ENCODE measurements at regions of chr7 and their contacts with region 1.

Region 1: DNA sequence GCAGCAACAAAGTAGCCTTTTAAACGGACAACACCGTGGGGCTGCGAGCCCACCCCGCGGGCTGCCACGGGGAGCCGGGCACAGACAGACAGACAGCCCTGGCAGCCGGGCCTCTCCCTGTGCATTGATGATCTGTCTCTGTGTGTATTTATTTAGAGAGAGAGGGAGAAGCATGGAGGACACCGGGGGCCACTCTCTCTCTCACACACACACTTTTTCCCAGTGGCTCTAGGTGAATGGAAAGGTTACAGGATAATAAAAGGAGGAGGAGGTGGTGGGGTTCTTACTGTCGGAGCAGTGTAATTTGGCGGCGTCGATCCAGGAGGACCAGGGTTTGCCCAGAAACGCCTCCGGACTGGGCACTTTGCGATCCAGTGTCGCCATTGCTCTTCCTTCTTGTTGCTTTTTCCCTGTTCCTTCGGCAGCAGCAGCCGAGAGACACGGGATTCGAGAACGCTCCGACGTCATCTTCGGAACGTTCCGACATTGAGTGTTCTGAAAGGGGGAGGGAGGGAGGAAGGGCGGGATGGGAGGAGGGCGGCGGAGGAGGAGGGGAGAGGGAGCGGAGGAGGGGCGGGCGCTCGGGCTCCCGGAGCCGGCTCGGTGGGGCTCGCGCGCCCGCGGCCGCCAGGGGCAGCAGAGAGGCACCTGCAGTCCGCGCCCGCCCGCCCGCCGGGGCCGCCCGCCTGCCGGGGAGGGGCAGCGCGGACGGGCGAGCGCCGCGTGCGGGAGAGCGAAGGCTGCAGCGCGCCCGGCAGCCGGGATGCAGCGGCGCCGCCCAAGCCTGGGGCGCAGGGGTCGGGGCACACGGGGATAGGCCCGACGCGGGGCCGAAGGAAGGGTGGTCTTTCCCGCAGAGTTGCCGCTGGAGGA is at the start of gene ATXN7L1:
- DNase-seq: peak; percentile 94 to 95
- ATAC-seq: peak; percentile 95 to 98 (median 96)
- H3K4me3 ChIP-seq: peak within 1 kb of the TSS; percentile 67 to 98 (median 80)
- H3K27ac ChIP-seq: peak within 1 kb of the TSS; percentile 34 to 92 (median 78)
- H3K4me1 ChIP-seq: peaks cover 0 to 34% (median 11%) of the 10 kb centered on the region in 9 donors
- H3K27me3 ChIP-seq: peaks cover 0 to 18% (median 0%) of the 10 kb centered on the region in 7 donors
- CTCF ChIP-seq: peak; percentile 29 to 89 (median 58)
- total RNA-seq, gene ATXN7L1: 3.1 to 7.2 (median 5.6) TPM

Region 2: DNA sequence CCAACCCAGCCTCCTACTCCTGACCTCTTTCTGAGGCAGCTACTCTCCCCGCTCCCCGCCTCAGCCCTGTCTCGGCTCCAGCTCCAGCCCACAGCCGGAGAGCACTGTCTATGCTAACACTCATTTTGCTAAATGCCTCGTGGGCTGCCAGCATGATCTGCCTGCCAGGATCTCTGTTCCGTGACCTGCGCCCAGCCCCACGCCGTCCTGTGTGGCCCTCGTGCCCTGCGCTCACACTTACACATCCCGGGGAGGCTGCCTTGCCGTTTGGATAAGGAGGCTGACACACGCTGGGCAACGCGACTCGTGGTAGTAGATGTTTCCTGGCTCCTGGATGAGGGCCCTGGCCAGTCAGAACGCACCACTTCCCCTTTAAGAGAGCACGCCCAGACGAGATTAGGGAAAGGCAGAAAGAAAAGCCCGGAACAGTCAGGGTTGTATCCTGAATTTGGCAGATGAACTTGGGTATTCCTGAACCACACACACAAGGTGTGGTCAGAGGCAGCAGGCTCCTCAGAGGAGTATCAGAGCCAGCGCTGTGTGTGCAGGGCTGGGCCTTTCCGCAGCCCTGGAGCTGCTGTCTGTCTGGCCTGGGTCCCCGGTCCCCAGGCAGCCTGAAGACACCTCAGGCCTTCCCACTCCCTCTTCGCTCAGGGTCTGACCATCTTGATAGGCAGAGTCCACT is 197.4 kb before region 1 on chr7:
- intact Hi-C with region 1: loop called in 1 of 10 experiments (anchors 10 kb)
- DNase-seq: peak; percentile 56 to 65
- ATAC-seq: peak; percentile 69 to 93 (median 86)
- H3K4me3 ChIP-seq: peak overlapping the region in 9 of 10 donors; percentile 21 to 58 (median 41)
- H3K27ac ChIP-seq: peak overlapping the region in 8 of 10 donors; percentile 18 to 87 (median 44)
- H3K4me1 ChIP-seq: peaks cover 0 to 79% (median 42%) of the 10 kb centered on the region in 9 donors
- H3K27me3 ChIP-seq: no peaks in the 10 kb centered on the region
- CTCF ChIP-seq: no peak

Region 3: GRCh38 chr7:106009403-106010226 is 133.3 kb after region 1 on chr7:
- intact Hi-C with region 1: loop called in 2 of 10 experiments (anchors 2 to 10 kb)
- DNase-seq: peak; percentile 57 to 78
- ATAC-seq: peak; percentile 93 to 98 (median 96)
- H3K4me3 ChIP-seq: peak overlapping the region in 1 of 10 donors; percentile 2
- H3K27ac ChIP-seq: peak overlapping the region in 1 of 10 donors; percentile 6
- H3K4me1 ChIP-seq: peaks cover 0 to 16% (median 5%) of the 10 kb centered on the region in 9 donors
- H3K27me3 ChIP-seq: peaks cover 0 to 3% (median 0%) of the 10 kb centered on the region in 7 donors
- CTCF ChIP-seq: peak; percentile 93 to 98 (median 96)

Region 4: GRCh38 chr7:106041140-106041717 is 164.9 kb after region 1 on chr7:
- intact Hi-C with region 1: loop called in 1 of 10 experiments (anchors 10 kb)
- DNase-seq: no peak
- ATAC-seq: peak in 2 of 8 donors; percentile 23 to 26
- H3K4me3 ChIP-seq: no peak overlapping the region
- H3K27ac ChIP-seq: no peak overlapping the region
- H3K4me1 ChIP-seq: peaks cover 0 to 21% (median 8%) of the 10 kb centered on the region in 9 donors
- H3K27me3 ChIP-seq: peaks cover 0 to 19% (median 0%) of the 10 kb centered on the region in 7 donors
- CTCF ChIP-seq: peak; percentile 34 to 78 (median 66)

Region 5: DNA sequence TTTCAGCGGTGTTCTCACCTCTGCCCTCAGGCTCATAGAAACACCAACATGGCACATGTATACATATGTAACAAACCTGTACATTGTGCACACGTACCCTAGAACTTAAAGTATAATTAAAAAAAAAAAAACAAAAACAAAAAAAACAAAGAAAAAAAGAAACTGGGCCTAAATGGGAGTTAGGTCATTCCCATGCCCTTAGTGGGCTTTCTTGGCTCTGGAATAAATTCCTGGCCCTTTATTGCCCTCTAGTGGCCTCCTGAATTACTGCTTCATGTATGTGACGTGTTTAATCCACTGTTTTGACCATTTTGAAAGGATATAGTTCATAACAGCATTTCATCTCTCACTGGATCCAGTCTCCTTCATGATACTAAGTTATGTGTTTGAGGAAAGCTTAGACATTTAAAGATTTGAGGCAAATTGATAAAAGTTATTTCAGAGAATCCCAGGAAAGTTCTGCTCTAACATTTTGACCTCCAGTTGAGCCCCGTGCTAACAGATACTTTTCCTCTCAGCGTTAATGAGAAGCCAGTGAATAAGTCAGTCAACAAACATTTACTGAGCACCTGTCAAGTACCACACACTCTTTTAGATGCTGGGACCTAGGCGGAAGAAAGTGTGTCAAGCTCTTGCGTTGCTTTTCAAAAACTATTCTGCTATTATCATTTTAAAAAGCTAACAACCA is 290.5 kb after region 1 on chr7:
- intact Hi-C with region 1: loop called in 1 of 10 experiments (anchors 1 kb)
- DNase-seq: peak in 1 of 2 donors; percentile 75
- ATAC-seq: peak in 7 of 8 donors; percentile 59 to 88 (median 78)
- H3K4me3 ChIP-seq: no peak overlapping the region
- H3K27ac ChIP-seq: peak overlapping the region in 6 of 10 donors; percentile 1 to 37 (median 24)
- H3K4me1 ChIP-seq: peaks cover 0 to 23% (median 5%) of the 10 kb centered on the region in 9 donors
- H3K27me3 ChIP-seq: no peaks in the 10 kb centered on the region
- CTCF ChIP-seq: peak; percentile 77 to 90 (median 85)

Measured in heart right ventricle (tissue), 16 donors.